ENCODE measurements at regions of chr12 and their contacts with region 1.

Region 1: DNA sequence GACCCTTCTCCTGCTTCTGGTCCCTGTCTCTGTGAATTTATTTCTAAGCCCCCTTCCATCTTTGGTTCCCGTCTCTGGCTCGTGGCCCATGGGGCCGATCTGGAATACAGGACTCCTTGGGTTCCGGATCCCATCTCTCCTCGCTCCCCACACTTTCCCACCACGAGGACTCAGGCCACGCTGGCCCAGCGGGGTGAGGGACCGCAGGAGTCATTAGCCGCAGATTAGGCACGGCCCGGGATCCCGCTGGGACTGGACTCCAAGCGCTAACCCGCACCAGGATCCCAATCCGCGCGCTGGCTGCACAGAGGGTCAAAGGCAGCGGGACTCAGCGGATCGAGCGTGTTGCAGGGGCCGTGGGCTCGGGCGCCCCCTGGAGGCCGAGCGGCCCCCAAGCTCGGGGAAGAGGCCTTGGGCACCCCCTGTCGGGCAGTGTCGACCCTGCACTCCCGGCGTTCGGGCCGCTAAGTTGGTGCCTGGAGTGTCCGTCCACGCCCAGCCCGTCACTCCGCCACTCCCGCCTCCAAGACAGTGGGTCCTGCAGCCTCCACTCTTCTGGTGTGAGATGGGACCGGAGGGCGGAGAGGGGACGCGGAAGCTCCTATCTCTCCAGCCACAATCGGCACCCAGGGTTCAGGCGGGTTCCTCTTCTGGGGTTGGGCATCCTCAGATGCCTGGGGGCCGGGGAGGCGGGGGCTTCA is 9.5 kb downstream of the SHMT2 start:
- DNase-seq: peak; percentile 44
- H3K4me3 ChIP-seq: peak overlapping the region; percentile 60
- H3K27me3 ChIP-seq: no peaks in the 10 kb centered on the region; the same call in 1 of the 2 replicates
- CTCF ChIP-seq: peak; percentile 100

Region 2: GRCh38 chr12:57124259-57124877 is 114.6 kb before region 1 on chr12:
- CTCF ChIA-PET with region 1: interaction called, 21 read pairs
- POLR2A ChIA-PET with region 1: no interaction called
- DNase-seq: no peak
- H3K4me3 ChIP-seq: no peak overlapping the region
- H3K27me3 ChIP-seq: no peaks in the 10 kb centered on the region
- CTCF ChIP-seq: peak; percentile 97

Region 3: GRCh38 chr12:57190037-57190436 is 49.0 kb before region 1 on chr12:
- CTCF ChIA-PET with region 1: interaction called, 13 read pairs
- POLR2A ChIA-PET with region 1: no interaction called
- DNase-seq: no peak
- H3K4me3 ChIP-seq: no peak overlapping the region
- H3K27me3 ChIP-seq: no peaks in the 10 kb centered on the region
- CTCF ChIP-seq: no peak

Region 4: DNA sequence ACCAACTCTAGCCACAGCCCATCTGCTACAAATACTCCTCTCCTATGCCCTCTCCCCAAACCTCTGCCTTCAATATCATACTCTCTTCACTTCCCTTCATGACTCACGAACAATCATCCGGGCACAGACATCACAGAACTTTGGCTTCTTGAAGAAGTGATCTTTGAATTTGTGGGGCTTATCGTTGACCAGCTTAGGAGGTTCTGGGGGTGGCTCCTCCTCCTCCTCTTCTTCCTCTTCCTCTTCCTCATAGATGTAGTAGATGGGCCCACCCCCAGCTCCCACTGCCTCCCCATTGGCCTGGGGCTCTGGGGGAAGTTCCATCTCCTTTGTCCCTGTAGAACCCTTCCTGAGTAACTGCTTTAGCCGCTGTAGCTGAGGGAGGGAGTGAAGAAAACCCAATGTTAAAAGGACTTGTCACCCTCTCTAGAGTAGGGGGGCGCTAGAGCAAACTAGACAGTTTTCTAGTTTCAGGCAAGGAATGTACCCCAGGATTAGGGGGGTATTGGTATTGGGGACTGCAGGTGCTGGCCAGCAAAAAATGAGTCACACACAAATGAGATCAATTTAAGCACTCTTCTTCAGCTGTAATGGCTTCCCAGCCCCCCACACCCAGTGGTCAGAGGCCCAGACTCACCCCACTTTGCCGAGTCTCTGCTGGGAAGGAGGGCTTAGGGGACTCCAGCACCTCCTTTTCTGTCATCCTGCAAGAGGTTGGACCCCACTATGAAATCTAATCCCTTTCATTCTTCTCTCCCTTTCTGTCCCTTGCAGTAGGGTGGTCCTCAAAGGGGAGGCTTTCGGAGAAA is 10.1 kb after region 1 on chr12:
- CTCF ChIA-PET with region 1: interaction called, 235 read pairs
- POLR2A ChIA-PET with region 1: no interaction called
- DNase-seq: no peak
- H3K4me3 ChIP-seq: no peak overlapping the region
- H3K27me3 ChIP-seq: no peaks in the 10 kb centered on the region
- CTCF ChIP-seq: no peak

Region 5: GRCh38 chr12:57276935-57277563 is 38.0 kb after region 1 on chr12:
- CTCF ChIA-PET with region 1: interaction called, 10 read pairs
- POLR2A ChIA-PET with region 1: no interaction called
- DNase-seq: no peak
- H3K4me3 ChIP-seq: no peak overlapping the region
- H3K27me3 ChIP-seq: no peaks in the 10 kb centered on the region
- CTCF ChIP-seq: peak; percentile 61

Region 6: GRCh38 chr12:57309420-57309819 is 70.4 kb after region 1 on chr12:
- CTCF ChIA-PET with region 1: no interaction called
- POLR2A ChIA-PET with region 1: no interaction called
- DNase-seq: peak; percentile 7
- H3K4me3 ChIP-seq: no peak overlapping the region
- H3K27me3 ChIP-seq: no peaks in the 10 kb centered on the region
- CTCF ChIP-seq: no peak

Region 7: GRCh38 chr12:57340104-57340503 is 101.1 kb after region 1 on chr12:
- CTCF ChIA-PET with region 1: no interaction called
- POLR2A ChIA-PET with region 1: no interaction called
- DNase-seq: peak; percentile 35
- H3K4me3 ChIP-seq: no peak overlapping the region
- H3K27me3 ChIP-seq: no peaks in the 10 kb centered on the region
- CTCF ChIP-seq: no peak